BJ (cell line): ENCODE measurements at regions of chr12 and their contacts with region 1.

Region 1: GRCh38 chr12:51915003-51915625 is 7.8 kb downstream of the ACVRL1 start:
- DNase-seq: no peak
- H3K4me3 ChIP-seq: no peak overlapping the region
- H3K27me3 ChIP-seq: no peaks in the 10 kb centered on the region
- CTCF ChIP-seq: no peak

Region 2: GRCh38 chr12:51898937-51899336 is 16.2 kb before region 1 on chr12:
- CTCF ChIA-PET with region 1: interaction called, 165 read pairs
- POLR2A ChIA-PET with region 1: no interaction called
- DNase-seq: no peak
- H3K4me3 ChIP-seq: no peak overlapping the region
- H3K27me3 ChIP-seq: no peaks in the 10 kb centered on the region
- CTCF ChIP-seq: no peak